ENCODE measurements at regions of chr15 and their contacts with region 1.

Region 1: GRCh38 chr15:84955089-84955848 is 26.4 kb upstream of the PDE8A start:
- DNase-seq: peak in 8 of 9 experiments; percentile 5 to 60 (median 48)
- ATAC-seq: peak; percentile 49
- H3K4me3 ChIP-seq: no peak overlapping the region
- H3K4me3 Mint-ChIP-seq: no peak overlapping the region
- H3K27ac ChIP-seq: no peak overlapping the region
- H3K27ac Mint-ChIP-seq: no peak overlapping the region
- H3K4me1 ChIP-seq: no peaks in the 10 kb centered on the region
- H3K4me1 Mint-ChIP-seq: peaks cover 8% of the 10 kb centered on the region
- H3K27me3 ChIP-seq: no peaks in the 10 kb centered on the region
- H3K27me3 Mint-ChIP-seq: peaks cover 12% of the 10 kb centered on the region
- CTCF ChIP-seq: peak; percentile 61

Region 2: GRCh38 chr15:84967380-84967779 is 12.1 kb after region 1 on chr15:
- CTCF ChIA-PET with region 1: no interaction called
- POLR2A ChIA-PET with region 1: no interaction called
- intact Hi-C with region 1: no loop called
- DNase-seq: no peak
- ATAC-seq: no peak
- H3K4me3 ChIP-seq: no peak overlapping the region
- H3K4me3 Mint-ChIP-seq: no peak overlapping the region
- H3K27ac ChIP-seq: no peak overlapping the region
- H3K27ac Mint-ChIP-seq: no peak overlapping the region
- H3K4me1 ChIP-seq: no peaks in the 10 kb centered on the region
- H3K4me1 Mint-ChIP-seq: no peaks in the 10 kb centered on the region
- H3K27me3 ChIP-seq: no peaks in the 10 kb centered on the region
- H3K27me3 Mint-ChIP-seq: no peaks in the 10 kb centered on the region
- CTCF ChIP-seq: no peak

Region 3: GRCh38 chr15:85003593-85004312 is 48.5 kb after region 1 on chr15:
- CTCF ChIA-PET with region 1: no interaction called
- POLR2A ChIA-PET with region 1: no interaction called
- intact Hi-C with region 1: loop called in 1 of 2 experiments (anchors 5 kb)
- DNase-seq: no peak
- ATAC-seq: no peak
- H3K4me3 ChIP-seq: no peak overlapping the region
- H3K4me3 Mint-ChIP-seq: no peak overlapping the region
- H3K27ac ChIP-seq: no peak overlapping the region
- H3K27ac Mint-ChIP-seq: no peak overlapping the region
- H3K4me1 ChIP-seq: peaks cover 9% of the 10 kb centered on the region
- H3K4me1 Mint-ChIP-seq: peaks cover 45% of the 10 kb centered on the region
- H3K27me3 ChIP-seq: no peaks in the 10 kb centered on the region
- H3K27me3 Mint-ChIP-seq: no peaks in the 10 kb centered on the region
- CTCF ChIP-seq: no peak